A673 (cell line): ENCODE measurements at regions of chr1 and their contacts with region 1.

Region 1: DNA sequence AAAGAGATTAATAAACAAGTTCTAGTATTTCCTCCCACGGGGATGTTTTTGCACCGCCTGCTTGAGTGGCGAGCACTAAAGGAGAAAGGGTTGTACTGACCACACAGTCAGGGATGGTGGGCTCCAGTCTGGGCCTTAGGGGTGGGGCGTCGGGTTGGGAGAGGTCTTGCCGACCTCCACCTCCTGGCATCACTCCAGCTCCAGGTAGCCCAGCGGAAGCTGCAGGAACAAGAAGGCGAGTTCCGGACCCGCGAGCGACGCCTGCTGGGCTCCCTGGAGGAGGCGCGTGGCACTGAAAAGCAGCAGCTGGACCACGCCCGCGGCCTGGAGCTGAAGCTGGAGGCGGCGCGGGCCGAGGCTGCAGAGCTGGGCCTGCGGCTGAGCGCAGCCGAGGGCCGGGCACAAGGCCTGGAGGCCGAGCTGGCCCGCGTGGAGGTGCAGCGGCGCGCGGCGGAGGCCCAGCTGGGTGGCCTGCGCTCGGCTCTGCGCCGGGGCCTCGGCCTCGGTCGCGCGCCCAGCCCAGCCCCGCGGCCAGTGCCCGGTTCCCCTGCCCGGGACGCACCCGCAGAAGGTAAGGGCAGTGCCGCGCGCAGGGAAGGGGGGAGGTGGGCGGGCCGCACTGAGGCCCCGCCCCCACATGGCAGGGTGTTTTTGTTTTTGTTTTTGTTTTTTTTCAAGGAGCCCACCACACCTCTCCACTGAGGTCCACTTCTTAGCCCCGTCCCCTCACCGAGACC is 19.7 kb downstream of the MFAP2 start:
- DNase-seq: peak; percentile 83
- H3K4me3 ChIP-seq: peak overlapping the region; percentile 43
- H3K27ac ChIP-seq: no peak overlapping the region
- H3K4me1 ChIP-seq: peaks cover 3% of the 10 kb centered on the region
- H3K27me3 ChIP-seq: no peaks in the 10 kb centered on the region
- CTCF ChIP-seq: peak; percentile 81

Region 2: DNA sequence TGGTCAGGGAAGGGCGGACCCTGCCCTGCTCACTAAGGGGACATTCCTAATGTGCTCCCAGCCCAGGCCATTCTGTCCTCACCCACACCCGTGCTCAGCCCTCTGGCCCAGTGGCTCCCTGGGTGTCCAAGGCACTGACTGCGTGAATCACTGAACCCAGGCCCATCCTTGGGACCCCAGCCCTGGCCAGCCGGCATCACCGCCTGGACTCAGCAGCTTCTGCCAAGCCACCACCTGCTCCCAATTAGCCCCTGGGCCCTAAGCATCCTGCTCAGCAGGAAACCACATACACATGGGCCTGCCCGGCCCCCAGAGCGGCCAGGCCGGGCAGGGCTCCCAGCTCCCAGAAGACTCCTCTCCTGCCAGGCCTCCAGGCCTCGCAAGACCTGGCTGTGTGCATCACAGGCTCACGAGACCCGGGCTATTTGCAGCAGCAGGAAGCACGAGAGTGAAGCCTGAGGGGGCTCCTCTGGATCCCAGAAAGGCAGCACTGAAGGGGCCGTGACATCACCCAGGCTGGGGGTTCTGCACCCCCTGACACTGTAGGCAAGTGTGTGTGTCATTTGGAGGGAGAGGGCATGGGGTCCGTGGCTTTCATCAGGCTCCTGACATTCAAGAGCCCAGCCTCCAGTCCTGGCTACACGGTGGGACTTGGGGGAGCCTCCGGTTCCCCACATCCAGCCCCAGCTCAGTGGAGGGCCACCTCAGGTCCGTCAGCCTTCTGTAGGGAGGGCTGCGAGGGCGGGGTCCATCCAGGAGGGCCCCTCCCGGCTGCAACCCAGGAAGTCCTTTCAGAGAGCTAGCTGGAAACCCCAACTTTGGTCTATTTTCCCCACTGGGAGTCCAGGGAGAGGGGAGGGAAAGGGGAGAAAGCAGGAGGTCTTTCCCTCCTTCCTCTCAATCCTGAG is 18.1 kb after region 1 on chr1:
- CTCF ChIA-PET with region 1: interaction called, 7 read pairs
- POLR2A ChIA-PET with region 1: interaction called, 20 read pairs
- intact Hi-C with region 1: no loop called
- DNase-seq: no peak
- H3K4me3 ChIP-seq: peak overlapping the region; percentile 92
- H3K27ac ChIP-seq: peak overlapping the region; percentile 36
- H3K4me1 ChIP-seq: peaks cover 13% of the 10 kb centered on the region
- H3K27me3 ChIP-seq: no peaks in the 10 kb centered on the region
- CTCF ChIP-seq: no peak

Region 3: GRCh38 chr1:17030206-17030605 is 69.5 kb after region 1 on chr1:
- CTCF ChIA-PET with region 1: interaction called, 10 read pairs
- POLR2A ChIA-PET with region 1: no interaction called
- intact Hi-C with region 1: no loop called
- DNase-seq: peak; percentile 50
- H3K4me3 ChIP-seq: no peak overlapping the region
- H3K27ac ChIP-seq: no peak overlapping the region
- H3K4me1 ChIP-seq: peaks cover 26% of the 10 kb centered on the region
- H3K27me3 ChIP-seq: no peaks in the 10 kb centered on the region
- CTCF ChIP-seq: no peak

Region 4: GRCh38 chr1:17045634-17046333 is 85.1 kb after region 1 on chr1:
- CTCF ChIA-PET with region 1: interaction called, 7 read pairs
- POLR2A ChIA-PET with region 1: no interaction called
- intact Hi-C with region 1: loop called (anchors 1 kb)
- DNase-seq: peak; percentile 82
- H3K4me3 ChIP-seq: peak overlapping the region; percentile 49
- H3K27ac ChIP-seq: peak overlapping the region; percentile 57
- H3K4me1 ChIP-seq: peaks cover 8% of the 10 kb centered on the region
- H3K27me3 ChIP-seq: no peaks in the 10 kb centered on the region
- CTCF ChIP-seq: peak; percentile 82